Caco-2 (cell line): ENCODE measurements at regions of chr2 and their contacts with region 1.

Region 1: DNA sequence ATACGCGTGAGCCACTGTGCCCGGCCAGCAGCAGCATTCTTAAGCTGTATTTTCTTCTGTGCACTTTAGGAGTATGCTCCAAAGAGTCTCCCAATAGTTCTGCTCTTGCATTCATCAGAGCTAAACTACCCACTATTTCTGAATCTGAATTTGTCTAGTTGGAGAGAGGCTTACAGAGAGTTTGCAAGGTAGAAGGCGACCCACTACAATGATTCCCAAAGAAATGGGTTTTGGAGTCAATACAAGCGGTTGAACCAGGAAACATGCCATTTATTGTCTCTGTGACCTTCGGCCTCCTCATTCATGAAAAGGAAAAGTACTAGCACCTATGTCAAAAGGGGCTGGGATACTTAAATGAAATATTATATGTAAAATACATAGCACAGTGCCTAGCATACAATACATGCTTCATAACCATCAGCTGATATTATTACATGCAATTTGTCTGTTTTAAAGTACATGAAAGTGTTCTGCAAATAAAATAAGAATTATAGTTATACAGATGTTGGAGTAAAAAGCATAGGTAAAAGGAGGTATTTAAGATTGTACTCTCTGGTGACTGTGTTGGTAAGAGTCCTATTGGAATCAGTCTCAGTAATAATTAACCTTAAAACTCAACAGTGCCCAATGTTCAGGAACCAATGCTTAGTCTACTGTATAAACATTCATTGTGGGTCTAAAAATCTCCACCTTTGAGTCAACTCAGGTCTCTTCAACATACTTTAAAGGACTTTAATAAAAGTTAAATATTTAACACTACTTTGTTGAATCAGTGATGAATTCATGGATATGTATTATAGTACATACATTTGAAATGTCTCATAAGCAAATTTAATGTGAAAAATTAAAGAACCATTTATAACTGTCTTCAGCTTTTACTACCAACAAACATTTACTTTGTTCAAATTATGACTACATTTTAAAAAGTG is 89.8 kb upstream of the GRB14 start:
- DNase-seq: peak; percentile 46 to 56
- H3K4me3 ChIP-seq: 0 out of 2 replicates have a peak overlapping the region, but pooled peaks have one; percentile 3
- H3K4me3 Mint-ChIP-seq: peak overlapping the region; percentile 59
- H3K27ac Mint-ChIP-seq: peak overlapping the region; percentile 40
- H3K4me1 ChIP-seq: peaks cover 66% of the 10 kb centered on the region
- H3K4me1 Mint-ChIP-seq: peaks cover 41% of the 10 kb centered on the region
- H3K27me3 ChIP-seq: no peaks in the 10 kb centered on the region
- H3K27me3 Mint-ChIP-seq: no peaks in the 10 kb centered on the region
- CTCF ChIP-seq: no peak

Region 2: DNA sequence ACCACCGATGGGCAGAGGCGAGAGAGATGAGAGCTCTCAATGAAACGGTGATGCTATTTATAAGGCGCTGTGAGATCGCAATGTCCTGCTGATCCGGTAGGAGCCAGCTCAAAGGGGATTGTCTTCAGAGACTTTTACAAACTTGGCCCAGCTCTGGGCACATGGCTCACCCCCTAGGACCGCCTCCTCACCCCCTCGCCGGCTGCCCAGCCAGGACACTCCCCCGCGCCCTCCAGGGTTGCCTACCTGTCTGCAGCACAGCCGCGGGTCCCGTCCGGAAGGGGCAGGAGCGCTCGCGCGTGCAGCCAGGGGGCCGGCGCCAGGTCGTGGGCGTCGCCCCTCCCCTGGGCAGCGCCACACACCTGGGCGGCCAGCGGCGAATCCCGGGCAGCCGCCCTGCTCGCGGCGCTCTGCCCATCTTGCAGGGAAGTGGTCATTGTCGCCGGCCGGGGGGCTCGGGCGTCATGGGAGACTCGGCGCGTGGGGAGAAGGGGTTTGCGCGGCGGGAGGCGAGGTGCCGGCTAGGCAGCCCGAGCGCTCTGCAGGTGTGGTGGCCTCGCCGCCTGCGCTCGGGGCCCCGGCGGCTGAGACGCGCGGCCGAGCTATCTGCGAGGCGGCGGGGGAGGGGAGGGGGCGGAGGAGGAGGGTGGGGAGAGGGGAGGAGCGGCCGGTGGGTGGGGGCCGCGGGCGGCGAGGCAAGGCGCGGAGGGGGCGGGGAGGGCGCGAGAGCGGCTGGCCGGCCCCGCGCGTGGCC is 90.1 kb before region 1 on chr2 and contains the start of gene GRB14:
- CTCF ChIA-PET with region 1: no interaction called
- POLR2A ChIA-PET with region 1: no interaction called
- intact Hi-C with region 1: loop called (anchors 2 kb)
- DNase-seq: peak; percentile 85 to 86
- H3K4me3 ChIP-seq: peak within 1 kb of the TSS; percentile 94
- H3K4me3 Mint-ChIP-seq: peak within 1 kb of the TSS; percentile 85
- H3K27ac Mint-ChIP-seq: peak within 1 kb of the TSS; percentile 63
- H3K4me1 ChIP-seq: peaks cover 18% of the 10 kb centered on the region
- H3K4me1 Mint-ChIP-seq: peaks cover 13% of the 10 kb centered on the region
- H3K27me3 ChIP-seq: no peaks in the 10 kb centered on the region
- H3K27me3 Mint-ChIP-seq: no peaks in the 10 kb centered on the region
- CTCF ChIP-seq: peak; percentile 10 to 18
- total RNA-seq, gene GRB14: 10.1 and 12.7 TPM in 2 replicates

Region 3: GRCh38 chr2:164792316-164793178 is 81.4 kb after region 1 on chr2:
- CTCF ChIA-PET with region 1: no interaction called
- POLR2A ChIA-PET with region 1: no interaction called
- intact Hi-C with region 1: no loop called
- DNase-seq: peak; percentile 38 to 40
- H3K4me3 ChIP-seq: no peak overlapping the region
- H3K4me3 Mint-ChIP-seq: peak overlapping the region; percentile 43
- H3K27ac Mint-ChIP-seq: peak overlapping the region; percentile 91
- H3K4me1 ChIP-seq: peaks cover 27% of the 10 kb centered on the region
- H3K4me1 Mint-ChIP-seq: peaks cover 31% of the 10 kb centered on the region
- H3K27me3 ChIP-seq: no peaks in the 10 kb centered on the region
- H3K27me3 Mint-ChIP-seq: no peaks in the 10 kb centered on the region
- CTCF ChIP-seq: no peak

Region 4: DNA sequence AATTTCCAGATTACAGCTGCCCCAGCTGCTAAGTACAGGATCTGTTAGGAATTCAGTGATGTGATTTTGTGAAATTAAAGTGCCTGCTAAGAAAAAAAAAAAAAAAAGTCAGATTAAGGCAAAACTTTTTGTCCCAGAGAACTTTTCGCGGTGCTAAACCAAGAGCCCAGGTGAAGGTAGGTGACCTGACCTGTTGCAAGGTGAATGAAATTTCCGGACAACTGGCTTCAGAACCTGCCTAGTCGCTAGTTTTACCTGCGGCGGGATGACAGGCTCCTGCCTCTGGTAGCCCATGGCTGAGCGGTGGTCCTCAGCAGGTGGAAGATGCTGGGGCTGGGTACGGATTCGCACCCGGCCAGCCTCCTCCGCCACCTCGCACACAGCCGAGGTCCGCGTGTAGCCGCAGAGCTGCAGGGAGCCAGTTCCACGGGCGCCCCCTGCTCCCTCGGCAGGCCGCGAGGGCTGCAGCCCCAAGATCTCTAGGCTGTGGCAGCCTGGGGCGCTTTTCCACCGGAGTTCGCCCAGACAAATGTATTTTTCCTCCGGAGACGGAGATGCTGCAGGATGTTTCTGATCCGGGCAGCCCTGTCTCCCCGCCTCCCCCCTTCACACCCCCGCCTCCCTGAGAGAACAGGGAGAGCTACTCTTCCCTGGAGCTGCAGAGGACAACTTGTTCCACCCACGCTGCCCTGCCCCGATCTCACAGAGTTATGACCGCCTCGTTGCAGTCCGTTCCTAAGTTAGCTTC is 244.0 kb after region 1 on chr2 and contains the start of gene SLC38A11:
- CTCF ChIA-PET with region 1: no interaction called
- POLR2A ChIA-PET with region 1: no interaction called
- intact Hi-C with region 1: no loop called
- DNase-seq: peak in 1 of 2 experiments; percentile 43
- H3K4me3 ChIP-seq: peak within 1 kb of the TSS; percentile 59
- H3K4me3 Mint-ChIP-seq: peak within 1 kb of the TSS; percentile 72
- H3K27ac Mint-ChIP-seq: no peak within 1 kb of the TSS
- H3K4me1 ChIP-seq: no peaks in the 10 kb centered on the region
- H3K4me1 Mint-ChIP-seq: no peaks in the 10 kb centered on the region
- H3K27me3 ChIP-seq: no peaks in the 10 kb centered on the region
- H3K27me3 Mint-ChIP-seq: no peaks in the 10 kb centered on the region
- CTCF ChIP-seq: peak in 1 of 2 experiments; percentile 36
- total RNA-seq, gene SLC38A11: 1.6 and 2.3 TPM in 2 replicates

Region 5: DNA sequence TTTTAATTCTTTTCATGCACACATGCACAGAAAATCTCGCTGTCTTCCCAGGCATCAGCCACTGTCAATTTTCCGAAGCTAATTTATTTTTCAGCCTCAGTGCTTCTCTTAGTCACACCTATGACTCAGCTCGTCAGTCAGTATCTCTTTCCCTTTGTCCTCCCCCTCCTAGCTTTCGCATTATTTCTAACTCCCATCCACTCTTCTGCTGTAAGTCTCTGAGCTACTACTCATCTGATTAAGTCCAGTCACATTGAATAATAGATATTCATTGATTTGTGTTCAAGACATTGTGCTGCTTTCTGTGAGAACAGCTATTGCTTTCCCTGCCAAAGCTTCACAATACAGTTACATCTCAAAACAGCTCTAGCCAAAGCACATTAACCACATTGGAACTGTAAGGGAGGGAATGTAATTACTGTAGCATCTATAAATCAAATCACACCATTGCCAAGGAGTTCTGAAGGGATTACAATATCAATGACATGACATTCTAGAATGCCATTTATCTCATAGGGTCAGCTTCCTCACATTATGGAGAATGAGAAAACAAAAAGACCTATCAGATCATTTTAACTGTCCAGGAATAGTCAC is 403.3 kb after region 1 on chr2:
- CTCF ChIA-PET with region 1: no interaction called
- POLR2A ChIA-PET with region 1: no interaction called
- intact Hi-C with region 1: loop called (anchors 1 kb)
- DNase-seq: no peak
- H3K4me3 ChIP-seq: no peak overlapping the region
- H3K4me3 Mint-ChIP-seq: no peak overlapping the region
- H3K27ac Mint-ChIP-seq: no peak overlapping the region
- H3K4me1 ChIP-seq: peaks cover 21% of the 10 kb centered on the region
- H3K4me1 Mint-ChIP-seq: peaks cover 8% of the 10 kb centered on the region
- H3K27me3 ChIP-seq: no peaks in the 10 kb centered on the region
- H3K27me3 Mint-ChIP-seq: no peaks in the 10 kb centered on the region
- CTCF ChIP-seq: no peak